B cell (primary cell): ENCODE measurements at regions of chr20 and their contacts with region 1.

Region 1: GRCh38 chr20:32674362-32674789 is 635 bp upstream of the C20orf203 start:
- DNase-seq: peak; percentile 58
- ATAC-seq: no peak
- H3K4me3 ChIP-seq: no peak overlapping the region
- H3K4me3 Mint-ChIP-seq: peak overlapping the region; percentile 0
- H3K27ac ChIP-seq: no peak overlapping the region
- H3K27ac Mint-ChIP-seq: no peak overlapping the region
- H3K4me1 ChIP-seq: peaks cover 23 to 26% of the 10 kb centered on the region in 2 donors
- H3K4me1 Mint-ChIP-seq: peaks cover 36% of the 10 kb centered on the region
- H3K27me3 ChIP-seq: no peaks in the 10 kb centered on the region
- H3K27me3 Mint-ChIP-seq: no peaks in the 10 kb centered on the region
- CTCF ChIP-seq: peak; percentile 72

Region 2: DNA sequence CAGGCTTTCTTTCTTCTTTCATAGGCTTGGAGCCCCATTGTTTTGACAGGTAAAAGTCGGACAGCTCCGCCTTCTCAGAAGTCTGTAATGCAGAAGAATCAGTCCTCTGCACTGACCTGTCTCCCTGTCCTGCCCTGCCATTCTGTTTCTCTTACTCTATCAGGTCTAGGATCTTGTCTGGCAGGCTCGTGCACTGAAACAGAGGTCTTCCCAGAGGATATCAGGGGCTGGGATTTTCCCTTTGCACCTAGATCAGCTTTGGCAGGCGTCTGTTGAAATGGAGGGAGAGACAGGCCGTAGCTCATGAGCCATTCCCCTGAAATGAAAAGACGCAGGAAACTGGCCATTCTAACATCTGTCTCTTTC is 371.9 kb before region 1 on chr20:
- CTCF ChIA-PET with region 1: no interaction called
- POLR2A ChIA-PET with region 1: no interaction called
- intact Hi-C with region 1: no loop called
- DNase-seq: no peak
- ATAC-seq: no peak
- H3K4me3 ChIP-seq: no peak overlapping the region
- H3K4me3 Mint-ChIP-seq: no peak overlapping the region
- H3K27ac ChIP-seq: no peak overlapping the region
- H3K27ac Mint-ChIP-seq: no peak overlapping the region
- H3K4me1 ChIP-seq: no peaks in the 10 kb centered on the region
- H3K4me1 Mint-ChIP-seq: peaks cover 16% of the 10 kb centered on the region
- H3K27me3 ChIP-seq: no peaks in the 10 kb centered on the region
- H3K27me3 Mint-ChIP-seq: no peaks in the 10 kb centered on the region
- CTCF ChIP-seq: no peak

Region 3: DNA sequence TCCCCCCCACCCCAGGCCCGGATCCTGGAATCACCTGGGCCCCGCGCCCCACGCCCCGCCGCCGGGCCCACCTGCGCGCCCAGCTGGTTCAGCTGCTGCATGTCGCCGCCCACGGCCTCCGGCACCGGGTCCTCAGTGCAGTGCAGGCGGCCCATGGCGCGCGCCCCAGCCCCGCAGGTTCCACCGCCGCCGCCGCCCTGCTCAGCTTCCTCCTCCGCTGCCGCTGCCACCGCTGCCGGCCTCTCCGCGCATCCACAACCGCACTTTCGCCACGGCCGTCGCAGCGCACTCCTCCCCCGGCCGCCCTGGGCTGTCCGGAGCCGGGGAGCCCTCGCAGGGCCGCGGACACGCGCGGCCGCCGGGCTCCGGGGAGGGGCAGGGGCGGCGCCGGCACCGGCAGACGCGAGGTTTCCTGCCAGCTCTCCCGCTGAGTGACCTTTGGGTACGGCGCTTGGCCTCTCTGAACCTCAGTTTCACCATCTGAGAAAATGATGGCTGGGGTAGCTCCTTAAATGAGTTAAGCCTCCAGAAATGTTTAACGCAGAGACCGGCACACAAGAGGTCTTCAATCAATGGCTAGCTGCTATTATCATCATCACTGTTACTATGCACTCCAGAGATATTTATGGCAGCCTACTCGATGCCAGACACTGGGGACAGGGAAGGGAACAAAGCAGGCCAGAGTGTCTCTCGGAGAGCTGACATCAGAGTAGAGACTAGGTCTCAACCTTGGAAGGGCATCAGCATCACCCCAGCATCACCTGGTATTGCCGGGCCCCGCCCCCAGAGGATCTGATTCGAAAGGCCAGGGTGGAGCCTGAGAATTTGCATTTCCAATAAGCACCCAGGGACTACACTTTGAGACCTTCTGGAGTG is 69.1 kb after region 1 on chr20 and contains the start of gene COMMD7:
- CTCF ChIA-PET with region 1: no interaction called
- POLR2A ChIA-PET with region 1: interaction called, 5 read pairs
- intact Hi-C with region 1: loop called (anchors 1 kb)
- DNase-seq: peak; percentile 83
- ATAC-seq: peak; percentile 79
- H3K4me3 ChIP-seq: peak within 1 kb of the TSS; percentile 59 to 94 (median 79)
- H3K4me3 Mint-ChIP-seq: peak within 1 kb of the TSS; percentile 99
- H3K27ac ChIP-seq: peak within 1 kb of the TSS; percentile 66 to 88
- H3K27ac Mint-ChIP-seq: peak within 1 kb of the TSS; percentile 98
- H3K4me1 ChIP-seq: peaks cover 13 to 18% of the 10 kb centered on the region in 2 donors
- H3K4me1 Mint-ChIP-seq: peaks cover 27% of the 10 kb centered on the region
- H3K27me3 ChIP-seq: no peaks in the 10 kb centered on the region
- H3K27me3 Mint-ChIP-seq: no peaks in the 10 kb centered on the region
- CTCF ChIP-seq: no peak
- total RNA-seq, gene COMMD7: 24.5 and 29.5 TPM in 2 replicates